ENCODE measurements at regions of chr14 and their contacts with region 1.

Region 1: DNA sequence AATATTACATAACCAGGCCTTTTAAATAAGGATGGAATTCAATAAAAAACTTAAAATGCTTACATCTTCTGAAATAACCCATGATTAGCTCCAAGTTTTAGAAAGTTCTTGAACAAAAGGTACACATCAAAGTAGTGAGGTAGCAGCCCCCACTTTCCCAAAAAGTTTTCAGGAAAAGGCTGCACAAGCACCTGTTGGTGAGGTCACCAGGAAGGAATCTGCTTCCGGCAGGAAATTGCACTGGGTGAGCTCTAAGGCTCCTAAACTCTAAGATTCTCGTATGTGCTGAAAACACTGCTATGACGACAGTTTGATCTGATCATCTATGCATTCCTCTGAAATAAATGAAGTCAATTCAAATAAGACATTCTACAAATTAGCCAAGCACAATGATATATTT is 34.3 kb upstream of the TTC7B start:
- DNase-seq: peak; percentile 82
- H3K4me3 ChIP-seq: no peak overlapping the region
- H3K27ac ChIP-seq: peak overlapping the region; percentile 91
- H3K4me1 ChIP-seq: peaks cover 20% of the 10 kb centered on the region
- H3K27me3 ChIP-seq: no peaks in the 10 kb centered on the region
- CTCF ChIP-seq: no peak
- POLR2A ChIP-seq: no peak

Region 2: DNA sequence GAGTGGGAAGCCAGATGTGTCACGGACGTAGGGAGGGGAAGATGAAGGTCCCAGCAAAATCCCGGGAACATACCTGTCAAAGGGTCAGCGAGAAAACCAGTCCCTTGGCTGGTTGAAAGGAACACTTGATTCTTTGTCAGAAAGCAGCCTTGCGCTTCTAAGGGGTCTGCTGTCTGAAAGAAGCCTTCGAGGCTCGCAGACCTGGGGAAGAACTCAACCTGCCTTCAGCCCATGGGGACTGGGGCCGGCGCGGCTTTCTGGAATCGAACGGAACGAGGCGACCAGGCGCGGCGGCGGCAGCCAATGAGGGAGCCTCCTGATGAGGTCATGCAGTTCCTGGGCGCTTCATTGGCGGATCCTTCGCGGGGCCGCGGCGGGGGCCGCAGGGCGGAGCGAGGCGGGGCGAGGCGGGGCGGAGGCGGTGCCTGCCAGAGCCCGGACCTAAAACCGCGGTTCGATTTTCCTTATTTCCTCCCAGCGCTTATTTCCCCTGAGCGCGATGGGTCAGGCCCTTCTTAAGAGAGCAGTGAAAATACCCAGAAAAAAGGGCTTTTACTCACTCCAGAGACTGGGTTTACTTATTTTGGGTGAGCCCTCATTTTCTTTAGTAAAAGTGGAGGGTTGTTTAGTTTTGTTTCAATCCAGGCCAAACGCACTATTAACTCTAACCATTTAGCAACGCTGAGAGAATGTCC is 22.4 kb before region 1 on chr14:
- CTCF ChIA-PET with region 1: interaction called, 3 read pairs
- POLR2A ChIA-PET with region 1: no interaction called
- dilution Hi-C with region 1: no loop called
- intact Hi-C with region 1: loop called (anchors 1 kb)
- DNase-seq: peak; percentile 93
- H3K4me3 ChIP-seq: peak overlapping the region; percentile 14 to 54 (median 15)
- H3K27ac ChIP-seq: peak overlapping the region; percentile 39
- H3K4me1 ChIP-seq: peaks cover 10% of the 10 kb centered on the region
- H3K27me3 ChIP-seq: no peaks in the 10 kb centered on the region
- CTCF ChIP-seq: no peak
- POLR2A ChIP-seq: peak; percentile 71

Region 3: GRCh38 chr14:90865484-90865883 is 15.0 kb after region 1 on chr14:
- CTCF ChIA-PET with region 1: interaction called, 11 read pairs
- POLR2A ChIA-PET with region 1: no interaction called
- dilution Hi-C with region 1: no loop called
- intact Hi-C with region 1: no loop called
- DNase-seq: no peak
- H3K4me3 ChIP-seq: no peak overlapping the region
- H3K27ac ChIP-seq: no peak overlapping the region
- H3K4me1 ChIP-seq: no peaks in the 10 kb centered on the region
- H3K27me3 ChIP-seq: no peaks in the 10 kb centered on the region
- CTCF ChIP-seq: no peak
- POLR2A ChIP-seq: no peak

Region 4: DNA sequence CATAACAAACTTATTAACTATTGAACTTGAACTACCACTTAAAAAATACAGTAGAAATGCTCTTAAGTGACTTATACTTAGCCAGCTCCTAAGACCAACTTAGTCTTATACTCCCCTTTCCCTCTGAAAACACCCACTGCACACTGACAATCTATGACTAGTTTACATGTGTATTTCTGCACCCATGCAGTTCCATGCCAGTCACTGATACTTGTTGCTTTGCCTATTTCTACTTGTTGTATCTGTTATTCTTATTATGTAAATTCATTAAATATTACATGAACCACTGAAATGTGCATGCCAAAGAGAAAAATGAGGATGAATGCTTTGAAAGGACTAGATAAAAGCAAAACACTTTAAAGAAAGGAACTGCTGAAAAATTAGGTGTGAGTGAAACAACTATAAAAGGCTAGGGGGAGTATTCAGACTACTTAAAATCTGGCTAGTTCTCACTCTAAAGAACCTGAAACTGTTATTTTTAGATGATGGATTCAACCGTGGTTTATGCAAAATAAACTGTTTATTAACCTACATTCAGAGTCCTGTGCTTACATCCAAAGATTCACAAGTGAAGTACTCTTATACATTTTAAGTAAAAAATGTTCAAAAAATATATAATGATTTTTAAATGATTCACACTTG is 135.2 kb after region 1 on chr14:
- CTCF ChIA-PET with region 1: no interaction called
- POLR2A ChIA-PET with region 1: no interaction called
- dilution Hi-C with region 1: no loop called
- intact Hi-C with region 1: no loop called
- DNase-seq: no peak
- H3K4me3 ChIP-seq: no peak overlapping the region
- H3K27ac ChIP-seq: no peak overlapping the region
- H3K4me1 ChIP-seq: no peaks in the 10 kb centered on the region
- H3K27me3 ChIP-seq: no peaks in the 10 kb centered on the region
- CTCF ChIP-seq: no peak
- POLR2A ChIP-seq: no peak